ENCODE measurements at regions of chr3 and their contacts with region 1.

Region 1: DNA sequence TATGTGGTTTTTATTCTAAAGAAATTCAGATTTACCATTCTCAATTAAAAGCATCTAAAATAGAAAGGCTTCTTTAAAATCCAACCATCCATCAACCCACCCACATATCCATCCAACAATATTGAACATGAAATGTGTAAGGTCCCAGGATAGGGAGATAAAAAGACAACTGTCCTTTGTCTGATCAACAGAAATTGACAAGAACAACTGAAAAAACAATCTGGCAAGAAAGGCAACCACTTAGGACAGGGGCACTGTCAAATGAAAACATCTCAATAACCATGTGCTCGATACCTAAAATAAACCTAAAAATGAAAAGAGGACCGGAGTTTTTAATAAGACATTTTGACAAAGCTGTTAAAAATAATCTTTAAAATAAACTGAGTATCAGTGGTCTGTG is 67.2 kb downstream of the NR1I2 start:
- DNase-seq: no peak
- H3K4me3 ChIP-seq: no peak overlapping the region
- H3K27ac ChIP-seq: no peak overlapping the region
- H3K4me1 ChIP-seq: no peaks in the 10 kb centered on the region
- H3K27me3 ChIP-seq: no peaks in the 10 kb centered on the region
- CTCF ChIP-seq: no peak

Region 2: DNA sequence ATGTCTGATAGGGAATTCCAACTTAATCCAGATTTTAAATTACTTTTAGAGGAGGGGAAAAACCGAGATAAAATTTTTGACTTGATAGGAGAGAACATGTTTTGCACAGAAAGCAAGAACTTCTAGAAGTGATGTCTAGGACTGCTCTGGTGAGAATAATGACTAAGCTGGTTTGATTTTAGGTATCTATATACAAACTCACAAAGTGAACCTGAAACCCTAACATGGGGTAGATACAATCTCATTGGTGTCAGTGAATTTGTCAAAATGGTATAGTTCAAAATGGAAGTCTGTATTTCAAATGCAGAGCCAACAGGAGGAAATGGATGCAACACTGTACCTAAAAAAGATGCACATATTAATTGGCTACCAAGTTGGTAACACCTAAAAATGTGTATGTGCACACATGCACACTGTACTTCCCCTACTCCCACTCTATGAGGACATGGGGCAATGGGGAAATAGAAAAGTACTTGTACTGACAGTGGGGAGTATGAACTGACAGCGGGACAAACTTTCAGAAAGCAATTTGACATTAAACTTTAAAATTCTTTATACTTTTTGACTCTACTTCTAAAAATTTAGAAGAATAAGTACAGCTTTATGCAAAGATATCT is 14.3 kb before region 1 on chr3:
- CTCF ChIA-PET with region 1: no interaction called
- POLR2A ChIA-PET with region 1: no interaction called
- intact Hi-C with region 1: loop called (anchors 1 kb)
- DNase-seq: no peak
- H3K4me3 ChIP-seq: no peak overlapping the region
- H3K27ac ChIP-seq: no peak overlapping the region
- H3K4me1 ChIP-seq: no peaks in the 10 kb centered on the region
- H3K27me3 ChIP-seq: no peaks in the 10 kb centered on the region
- CTCF ChIP-seq: no peak

Measured in A673 (cell line).